ENCODE measurements at regions of chr16 and their contacts with region 1.

Region 1: DNA sequence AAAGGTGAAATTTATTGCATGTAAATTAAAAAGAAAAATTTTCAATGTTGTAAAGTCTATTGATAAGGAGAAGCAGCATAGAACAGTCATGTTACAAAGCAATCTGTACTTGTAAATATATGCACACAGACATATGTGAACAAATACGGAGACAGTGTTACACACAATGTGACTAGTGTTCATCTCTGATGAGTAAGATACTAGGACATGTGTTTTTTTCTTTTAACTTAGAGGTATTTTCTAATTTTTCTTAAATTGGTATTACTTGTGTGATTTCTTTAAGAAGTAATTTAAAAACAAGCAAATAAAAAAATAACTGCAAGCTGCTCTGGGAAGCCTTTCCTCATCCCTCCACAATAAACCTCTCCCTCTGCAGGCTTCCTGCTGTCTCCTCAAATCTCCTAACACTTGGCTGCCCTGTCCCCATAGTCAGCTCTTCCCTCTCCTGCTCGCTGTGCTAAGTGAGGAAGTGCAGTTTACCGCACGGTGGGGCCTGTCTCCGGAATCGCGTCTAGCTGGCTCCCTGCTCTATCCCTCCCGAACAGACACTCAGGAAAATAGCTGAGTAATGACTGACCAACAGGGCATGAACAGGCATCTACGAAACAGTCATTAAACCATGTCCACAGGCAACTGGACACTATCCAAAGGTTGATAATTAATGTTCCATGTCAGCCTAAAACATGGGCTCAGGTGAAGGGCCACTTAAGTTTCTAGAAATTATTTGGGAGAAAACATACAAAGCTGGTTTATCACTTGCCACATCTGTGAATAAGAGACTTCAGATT is 35.9 kb downstream of the CMTM4 start:
- DNase-seq: peak; percentile 72
- H3K4me3 ChIP-seq: peak overlapping the region in 1 of 2 experiments; percentile 8; a peak in 2 of 4 replicates
- H3K27ac ChIP-seq: peak overlapping the region; percentile 88 to 89
- H3K4me1 ChIP-seq: peaks cover 20 to 26% of the 10 kb centered on the region in 2 experiments
- H3K27me3 ChIP-seq: no peaks in the 10 kb centered on the region
- CTCF ChIP-seq: peak; percentile 48
- EP300 ChIP-seq: peak in 1 of 2 experiments; percentile 22; a peak in 3 of 4 replicates
- RAD21 ChIP-seq: peak; percentile 27; the same call in 1 of the 2 replicates

Region 2: GRCh38 chr16:65769055-65769465 is 891.6 kb before region 1 on chr16:
- CTCF ChIA-PET with region 1: no interaction called
- POLR2A ChIA-PET with region 1: no interaction called
- DNase-seq: no peak
- H3K4me3 ChIP-seq: no peak overlapping the region
- H3K27ac ChIP-seq: no peak overlapping the region
- H3K4me1 ChIP-seq: peaks cover 0 to 7% of the 10 kb centered on the region in 2 experiments; a peak in 1 of 4 replicates
- H3K27me3 ChIP-seq: no peaks in the 10 kb centered on the region
- CTCF ChIP-seq: no peak
- EP300 ChIP-seq: no peak
- RAD21 ChIP-seq: no peak

Region 3: GRCh38 chr16:66483689-66484481 is 176.7 kb before region 1 on chr16:
- CTCF ChIA-PET with region 1: no interaction called
- POLR2A ChIA-PET with region 1: no interaction called
- DNase-seq: peak; percentile 90
- H3K4me3 ChIP-seq: peak overlapping the region in 1 of 2 experiments; percentile 41; a peak in 1 of 4 replicates
- H3K27ac ChIP-seq: no peak overlapping the region
- H3K4me1 ChIP-seq: peaks cover 10% of the 10 kb centered on the region in 2 experiments; a peak in 2 of 4 replicates
- H3K27me3 ChIP-seq: no peaks in the 10 kb centered on the region
- CTCF ChIP-seq: peak; percentile 95
- EP300 ChIP-seq: no peak
- RAD21 ChIP-seq: peak; percentile 93

Region 4: GRCh38 chr16:66539623-66540469 is 120.8 kb before region 1 on chr16:
- CTCF ChIA-PET with region 1: no interaction called
- POLR2A ChIA-PET with region 1: no interaction called
- DNase-seq: no peak
- H3K4me3 ChIP-seq: no peak overlapping the region
- H3K27ac ChIP-seq: no peak overlapping the region
- H3K4me1 ChIP-seq: no peaks in the 10 kb centered on the region
- H3K27me3 ChIP-seq: no peaks in the 10 kb centered on the region
- CTCF ChIP-seq: no peak
- EP300 ChIP-seq: no peak
- RAD21 ChIP-seq: no peak

Region 5: GRCh38 chr16:66608241-66609138 is 52.1 kb before region 1 on chr16:
- CTCF ChIA-PET with region 1: interaction called, 39 read pairs
- POLR2A ChIA-PET with region 1: interaction called, 5 read pairs
- DNase-seq: peak; percentile 94
- H3K4me3 ChIP-seq: no peak overlapping the region; a peak in 1 of 4 replicates
- H3K27ac ChIP-seq: peak overlapping the region; percentile 36 to 38; a peak in 3 of 4 replicates
- H3K4me1 ChIP-seq: peaks cover 7 to 19% of the 10 kb centered on the region in 2 experiments; a peak in 3 of 4 replicates
- H3K27me3 ChIP-seq: no peaks in the 10 kb centered on the region
- CTCF ChIP-seq: peak; percentile 94
- EP300 ChIP-seq: no peak
- RAD21 ChIP-seq: peak; percentile 72

Region 6: GRCh38 chr16:66696669-66697630 is 36.3 kb after region 1 on chr16 and contains the start of gene CMTM4:
- CTCF ChIA-PET with region 1: interaction called, 29 read pairs
- POLR2A ChIA-PET with region 1: interaction called, 4 read pairs
- DNase-seq: peak; percentile 98
- H3K4me3 ChIP-seq: peak within 1 kb of the TSS; percentile 58 to 85
- H3K27ac ChIP-seq: no peak within 1 kb of the TSS
- H3K4me1 ChIP-seq: peaks cover 6 to 9% of the 10 kb centered on the region in 2 experiments; a peak in 2 of 4 replicates
- H3K27me3 ChIP-seq: no peaks in the 10 kb centered on the region
- CTCF ChIP-seq: peak; percentile 31
- EP300 ChIP-seq: no peak
- RAD21 ChIP-seq: no peak; the same call in 1 of the 2 replicates
- polyA plus RNA-seq, gene CMTM4: 21.7 and 30.8 TPM in 2 replicates

Region 7: DNA sequence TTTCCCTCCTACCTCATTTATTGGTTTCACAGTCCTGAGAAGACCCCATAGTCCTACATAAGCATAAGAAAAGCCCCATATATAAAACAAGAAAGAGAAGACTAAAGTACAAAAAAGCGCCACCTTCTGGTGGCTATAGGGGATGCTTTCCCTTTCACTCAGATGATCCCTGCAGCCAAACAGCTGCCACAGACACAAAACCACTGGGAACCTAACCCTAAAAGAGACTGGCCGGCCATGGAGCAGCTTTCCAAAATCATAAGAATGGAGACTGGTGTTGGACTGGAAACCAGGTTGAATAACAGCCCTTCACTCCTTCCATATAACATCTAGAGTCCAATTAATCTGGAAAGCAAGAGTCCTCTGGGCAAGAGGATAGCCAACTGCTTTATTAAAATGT is 79.4 kb after region 1 on chr16:
- CTCF ChIA-PET with region 1: interaction called, 19 read pairs
- POLR2A ChIA-PET with region 1: interaction called, 3 read pairs
- DNase-seq: peak; percentile 69
- H3K4me3 ChIP-seq: peak overlapping the region in 1 of 2 experiments; percentile 12; a peak in 1 of 4 replicates
- H3K27ac ChIP-seq: 0 out of 4 replicates have a peak overlapping the region, but pooled peaks of 1 of the 2 experiments have one; percentile 75
- H3K4me1 ChIP-seq: peaks cover 10 to 15% of the 10 kb centered on the region in 2 experiments; a peak in 3 of 4 replicates
- H3K27me3 ChIP-seq: no peaks in the 10 kb centered on the region
- CTCF ChIP-seq: peak; percentile 82
- EP300 ChIP-seq: no peak
- RAD21 ChIP-seq: peak; percentile 43

Region 8: GRCh38 chr16:66751303-66751991 is 90.8 kb after region 1 on chr16 and contains the start of gene DYNC1LI2:
- CTCF ChIA-PET with region 1: interaction called, 16 read pairs
- POLR2A ChIA-PET with region 1: no interaction called
- DNase-seq: peak; percentile 98
- H3K4me3 ChIP-seq: peak within 1 kb of the TSS; percentile 87 to 91
- H3K27ac ChIP-seq: peak within 1 kb of the TSS; percentile 75 to 92
- H3K4me1 ChIP-seq: peaks cover 15 to 17% of the 10 kb centered on the region in 2 experiments; a peak in 2 of 4 replicates
- H3K27me3 ChIP-seq: no peaks in the 10 kb centered on the region
- CTCF ChIP-seq: peak; percentile 65
- EP300 ChIP-seq: 0 out of 4 replicates have a peak, but pooled peaks of 1 of the 2 experiments have one; percentile 6
- RAD21 ChIP-seq: peak; percentile 40; the same call in 1 of the 2 replicates
- polyA plus RNA-seq, gene DYNC1LI2: 33.1 and 49.6 TPM in 2 replicates

Measured in SK-N-SH (cell line).